ENCODE measurements at regions of chr22 and their contacts with region 1.

Region 1: GRCh38 chr22:41468381-41469217 is at the starts of genes ACO2 and PHF5A:
- DNase-seq: peak; percentile 98
- H3K4me3 Mint-ChIP-seq: peak within 1 kb of the TSS; percentile 96
- H3K27ac Mint-ChIP-seq: peak within 1 kb of the TSS; percentile 100
- H3K4me1 Mint-ChIP-seq: peaks cover 33% of the 10 kb centered on the region
- H3K27me3 Mint-ChIP-seq: no peaks in the 10 kb centered on the region
- CTCF ChIP-seq: no peak
- total RNA-seq, gene ACO2: 105 and 109 TPM in 2 replicates
- total RNA-seq, gene PHF5A: 62.3 and 68.8 TPM in 2 replicates

Region 2: GRCh38 chr22:41403532-41404318 is 64.9 kb before region 1 on chr22:
- CTCF ChIA-PET with region 1: interaction called, 4 read pairs
- POLR2A ChIA-PET with region 1: interaction called, 10 read pairs
- intact Hi-C with region 1: no loop called
- DNase-seq: peak; percentile 93
- H3K4me3 Mint-ChIP-seq: no peak overlapping the region
- H3K27ac Mint-ChIP-seq: peak overlapping the region; percentile 8
- H3K4me1 Mint-ChIP-seq: peaks cover 13% of the 10 kb centered on the region
- H3K27me3 Mint-ChIP-seq: no peaks in the 10 kb centered on the region
- CTCF ChIP-seq: peak; percentile 86

Region 3: GRCh38 chr22:41458161-41458728 is 10.4 kb before region 1 on chr22:
- CTCF ChIA-PET with region 1: no interaction called
- POLR2A ChIA-PET with region 1: interaction called, 59 read pairs
- intact Hi-C with region 1: no loop called
- DNase-seq: no peak
- H3K4me3 Mint-ChIP-seq: no peak overlapping the region
- H3K27ac Mint-ChIP-seq: no peak overlapping the region
- H3K4me1 Mint-ChIP-seq: no peaks in the 10 kb centered on the region
- H3K27me3 Mint-ChIP-seq: no peaks in the 10 kb centered on the region
- CTCF ChIP-seq: no peak

Region 4: GRCh38 chr22:41501209-41501608 is 32.6 kb after region 1 on chr22:
- CTCF ChIA-PET with region 1: no interaction called
- POLR2A ChIA-PET with region 1: interaction called, 21 read pairs
- intact Hi-C with region 1: no loop called
- DNase-seq: peak; percentile 41
- H3K4me3 Mint-ChIP-seq: no peak overlapping the region
- H3K27ac Mint-ChIP-seq: no peak overlapping the region
- H3K4me1 Mint-ChIP-seq: peaks cover 8% of the 10 kb centered on the region
- H3K27me3 Mint-ChIP-seq: no peaks in the 10 kb centered on the region
- CTCF ChIP-seq: peak; percentile 24

Region 5: DNA sequence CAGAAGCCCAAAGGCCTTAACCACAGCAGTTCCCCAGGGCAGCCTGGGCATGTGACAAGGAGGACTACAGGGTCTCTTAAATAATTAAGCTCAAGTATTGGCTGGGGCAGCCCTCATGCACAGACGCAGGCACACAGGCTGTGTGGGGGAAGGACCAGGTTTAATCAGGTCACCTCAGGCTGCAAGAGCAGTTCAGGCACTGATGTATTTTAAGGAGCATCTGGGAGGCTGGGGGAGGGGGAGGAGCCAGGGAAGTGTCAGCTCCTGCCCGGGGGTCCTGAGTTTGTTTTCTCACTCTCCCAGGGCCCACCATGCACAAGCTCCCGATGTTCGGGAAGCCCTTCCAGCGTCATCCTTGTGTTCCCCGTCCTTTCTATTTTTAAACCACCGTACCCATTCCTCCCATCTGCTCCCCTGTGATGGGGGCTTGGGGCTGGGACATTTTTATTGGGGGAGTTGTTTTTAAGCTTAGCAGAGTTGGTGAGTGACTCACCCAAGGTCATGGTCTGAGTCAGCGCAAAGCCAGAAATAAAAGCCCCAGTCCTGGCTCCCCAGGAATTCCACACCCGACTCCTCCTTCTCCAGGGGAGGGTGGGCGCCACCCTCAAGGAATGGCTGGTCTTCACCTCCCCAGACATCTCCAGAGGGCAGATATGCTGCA is 94.6 kb after region 1 on chr22:
- CTCF ChIA-PET with region 1: no interaction called
- POLR2A ChIA-PET with region 1: no interaction called
- intact Hi-C with region 1: no loop called
- DNase-seq: peak; percentile 56
- H3K4me3 Mint-ChIP-seq: no peak overlapping the region
- H3K27ac Mint-ChIP-seq: no peak overlapping the region
- H3K4me1 Mint-ChIP-seq: peaks cover 8% of the 10 kb centered on the region
- H3K27me3 Mint-ChIP-seq: no peaks in the 10 kb centered on the region
- CTCF ChIP-seq: no peak

Region 6: DNA sequence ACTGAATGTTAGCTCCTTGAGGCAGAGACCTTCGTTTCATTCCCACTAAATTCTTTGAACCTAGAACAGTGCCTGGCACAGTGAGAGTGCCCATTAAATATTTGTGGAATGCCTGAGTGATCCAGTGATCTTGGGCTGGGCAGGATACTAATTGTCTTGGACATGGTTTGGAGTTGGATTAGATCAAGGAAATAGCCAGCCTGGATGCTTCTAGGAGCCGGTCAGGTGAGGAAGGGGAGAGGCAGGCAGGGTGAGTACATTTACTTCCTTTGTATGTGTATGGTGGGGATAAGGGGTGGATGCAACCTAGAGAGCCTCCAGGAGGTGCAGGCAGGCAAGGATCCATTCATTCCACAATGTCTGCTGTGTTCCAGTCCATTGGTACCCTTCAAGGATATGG is 368.0 kb after region 1 on chr22:
- CTCF ChIA-PET with region 1: no interaction called
- POLR2A ChIA-PET with region 1: no interaction called
- intact Hi-C with region 1: no loop called
- DNase-seq: no peak
- H3K4me3 Mint-ChIP-seq: no peak overlapping the region
- H3K27ac Mint-ChIP-seq: peak overlapping the region; percentile 59
- H3K4me1 Mint-ChIP-seq: peaks cover 52% of the 10 kb centered on the region
- H3K27me3 Mint-ChIP-seq: no peaks in the 10 kb centered on the region
- CTCF ChIP-seq: no peak